ENCODE measurements at regions of chr12 and their contacts with region 1.

Region 1: DNA sequence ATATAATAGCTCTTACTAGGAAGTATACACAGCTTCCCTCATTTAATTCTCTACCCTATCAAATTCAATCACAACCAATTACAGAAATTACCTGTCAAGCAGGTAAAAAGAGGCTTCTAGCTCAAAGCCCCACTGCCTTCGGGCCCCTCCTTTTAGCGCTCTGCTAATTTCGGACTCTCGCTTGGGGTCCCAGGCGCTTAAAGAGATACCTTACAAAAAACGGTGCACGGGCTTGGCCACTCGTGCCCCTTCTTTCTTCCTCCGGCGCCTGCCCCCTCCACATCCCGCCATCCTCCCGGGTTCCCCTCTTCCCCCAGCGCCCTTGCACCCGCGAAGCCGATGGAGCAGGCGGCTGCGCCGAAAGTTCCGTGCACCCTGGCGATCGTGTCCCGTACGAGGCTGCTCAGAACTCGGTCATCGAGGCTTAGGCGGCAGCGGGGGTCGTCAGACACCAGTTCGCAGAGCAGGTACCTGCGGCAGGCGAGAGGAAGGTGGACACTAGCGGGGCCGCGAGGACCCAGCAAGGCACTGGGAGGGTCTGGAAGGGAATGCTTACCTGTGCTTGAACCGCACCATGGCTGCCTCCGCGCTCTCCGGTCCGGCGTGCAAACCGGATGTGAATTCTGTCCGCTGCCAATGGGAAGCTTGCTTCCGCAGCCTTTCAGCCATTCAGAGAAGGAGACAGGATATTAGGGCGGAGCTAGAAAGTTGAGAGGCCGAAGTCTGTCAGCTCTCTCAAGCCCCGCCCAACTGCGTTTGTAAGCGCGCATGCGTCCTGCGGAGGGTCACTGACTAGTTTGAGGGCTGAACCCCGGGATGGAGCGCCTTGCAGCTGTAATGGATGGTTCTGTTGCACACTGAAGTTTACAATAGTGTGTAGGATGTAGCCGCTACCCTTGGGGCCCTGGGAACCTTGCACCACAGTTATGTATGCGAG is at the start of gene POP5:
- DNase-seq: peak; percentile 96 to 97
- ATAC-seq: peak; percentile 88 to 97 (median 96)
- H3K4me3 ChIP-seq: peak within 1 kb of the TSS; percentile 65 to 97 (median 80)
- H3K27ac ChIP-seq: peak within 1 kb of the TSS in 9 of 10 donors; percentile 43 to 86 (median 76)
- H3K4me1 ChIP-seq: peaks cover 6 to 40% (median 27%) of the 10 kb centered on the region in 9 donors
- H3K27me3 ChIP-seq: peaks cover 0 to 22% (median 0%) of the 10 kb centered on the region in 7 donors
- CTCF ChIP-seq: peak in 1 of 9 donors; percentile 4
- total RNA-seq, gene POP5: 21.1 to 49.9 (median 36.9) TPM

Region 2: GRCh38 chr12:120528861-120529525 is 52.1 kb before region 1 on chr12 and contains the start of gene COQ5:
- intact Hi-C with region 1: no loop called
- DNase-seq: peak; percentile 91 to 94
- ATAC-seq: peak; percentile 93 to 97 (median 96)
- H3K4me3 ChIP-seq: peak within 1 kb of the TSS; percentile 60 to 80 (median 72)
- H3K27ac ChIP-seq: peak within 1 kb of the TSS; percentile 64 to 96 (median 93)
- H3K4me1 ChIP-seq: peaks cover 0 to 21% (median 16%) of the 10 kb centered on the region in 9 donors
- H3K27me3 ChIP-seq: no peaks in the 10 kb centered on the region
- CTCF ChIP-seq: no peak
- total RNA-seq, gene COQ5: 32.0 to 56.0 (median 43.6) TPM

Region 3: DNA sequence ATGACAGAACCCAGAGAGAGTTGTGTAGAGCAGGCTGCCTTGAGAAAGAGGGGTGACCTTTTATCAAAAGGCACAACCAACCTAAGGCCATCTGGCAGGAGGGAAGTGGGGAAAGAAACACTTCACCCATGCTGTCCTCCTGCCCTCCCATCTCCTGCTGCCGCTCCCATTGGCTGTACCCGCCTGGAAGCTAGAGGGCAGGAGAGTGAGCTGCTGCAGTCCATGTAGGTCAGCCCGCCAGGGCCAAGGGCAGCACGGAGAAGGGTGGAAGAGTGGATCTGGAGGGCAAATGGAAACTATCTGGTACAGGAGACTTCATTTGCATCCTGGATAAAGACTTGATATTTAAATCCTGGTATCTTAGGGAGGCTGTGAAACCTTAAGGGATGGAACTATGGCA is 47.9 kb after region 1 on chr12:
- intact Hi-C with region 1: no loop called
- DNase-seq: peak; percentile 13 to 23
- ATAC-seq: peak in 7 of 8 donors; percentile 58 to 85 (median 75)
- H3K4me3 ChIP-seq: no peak overlapping the region
- H3K27ac ChIP-seq: no peak overlapping the region
- H3K4me1 ChIP-seq: no peaks in the 10 kb centered on the region
- H3K27me3 ChIP-seq: peaks cover 0 to 11% (median 0%) of the 10 kb centered on the region in 7 donors
- CTCF ChIP-seq: peak in 6 of 9 donors; percentile 14 to 50 (median 37)

Region 4: GRCh38 chr12:120649442-120650232 is 68.6 kb after region 1 on chr12:
- intact Hi-C with region 1: loop called (anchors 1 to 5 kb)
- DNase-seq: peak; percentile 16 to 51
- ATAC-seq: peak in 4 of 8 donors; percentile 1 to 29 (median 5)
- H3K4me3 ChIP-seq: peak overlapping the region; percentile 33 to 57 (median 48)
- H3K27ac ChIP-seq: peak overlapping the region; percentile 31 to 85 (median 68)
- H3K4me1 ChIP-seq: peaks cover 12 to 57% (median 46%) of the 10 kb centered on the region in 9 donors
- H3K27me3 ChIP-seq: peaks cover 0 to 38% (median 12%) of the 10 kb centered on the region in 7 donors
- CTCF ChIP-seq: peak in 3 of 9 donors; percentile 20 to 33 (median 21)

Region 5: GRCh38 chr12:120719496-120720233 is 138.6 kb after region 1 on chr12:
- intact Hi-C with region 1: loop called in 6 of 10 experiments (anchors 1 to 10 kb)
- DNase-seq: no peak
- ATAC-seq: peak in 1 of 8 donors; percentile 32
- H3K4me3 ChIP-seq: no peak overlapping the region
- H3K27ac ChIP-seq: peak overlapping the region in 3 of 10 donors; percentile 29 to 53 (median 36)
- H3K4me1 ChIP-seq: peaks cover 0 to 42% (median 13%) of the 10 kb centered on the region in 9 donors
- H3K27me3 ChIP-seq: no peaks in the 10 kb centered on the region
- CTCF ChIP-seq: no peak

Region 6: GRCh38 chr12:121095544-121096198 is 514.6 kb after region 1 on chr12:
- intact Hi-C with region 1: loop called in 2 of 10 experiments (anchors 2 to 5 kb)
- DNase-seq: peak; percentile 58 to 75
- ATAC-seq: peak; percentile 85 to 96 (median 92)
- H3K4me3 ChIP-seq: peak overlapping the region in 8 of 10 donors; percentile 21 to 54 (median 42)
- H3K27ac ChIP-seq: peak overlapping the region in 3 of 10 donors; percentile 27 to 44 (median 33)
- H3K4me1 ChIP-seq: peaks cover 0 to 20% (median 10%) of the 10 kb centered on the region in 9 donors
- H3K27me3 ChIP-seq: no peaks in the 10 kb centered on the region
- CTCF ChIP-seq: peak; percentile 69 to 93 (median 88)

Measured in heart right ventricle (tissue), 16 donors.